ENCODE measurements at regions of chr1 and their contacts with region 1.

Region 1: DNA sequence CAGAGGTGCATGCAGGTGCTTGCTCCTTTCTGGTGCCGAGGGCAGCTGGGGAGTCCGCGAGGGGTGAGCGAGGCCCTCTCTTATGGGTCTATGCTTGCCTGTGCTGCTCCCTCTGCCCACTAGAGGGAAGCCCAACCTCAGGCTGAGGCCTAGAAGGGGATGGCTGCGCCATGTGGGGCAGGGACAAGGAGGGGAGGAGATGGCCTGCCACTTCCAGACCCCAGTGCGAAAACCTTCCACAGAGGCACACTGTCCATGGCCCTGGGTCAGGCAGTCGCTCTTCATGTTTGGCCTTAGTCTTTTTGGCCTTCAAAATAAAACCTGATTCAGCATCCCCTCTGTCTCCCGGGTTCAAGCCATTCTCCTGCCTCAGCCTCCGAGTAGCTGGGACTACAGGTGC is 14.0 kb downstream of the RHBG start:
- DNase-seq: peak; percentile 86
- ATAC-seq: peak; percentile 95
- H3K4me3 ChIP-seq: no peak overlapping the region
- H3K27ac ChIP-seq: no peak overlapping the region
- H3K4me1 ChIP-seq: peaks cover 12% of the 10 kb centered on the region; the same call in 1 of the 2 replicates
- H3K27me3 ChIP-seq: no peaks in the 10 kb centered on the region
- CTCF ChIP-seq: peak; percentile 95

Region 2: GRCh38 chr1:156291226-156292061 is 91.6 kb before region 1 on chr1:
- CTCF ChIA-PET with region 1: no interaction called
- POLR2A ChIA-PET with region 1: no interaction called
- intact Hi-C with region 1: no loop called
- DNase-seq: peak; percentile 76
- ATAC-seq: peak; percentile 95
- H3K4me3 ChIP-seq: peak overlapping the region; percentile 66
- H3K27ac ChIP-seq: no peak overlapping the region
- H3K4me1 ChIP-seq: peaks cover 15% of the 10 kb centered on the region; the same call in 1 of the 2 replicates
- H3K27me3 ChIP-seq: no peaks in the 10 kb centered on the region
- CTCF ChIP-seq: no peak

Region 3: GRCh38 chr1:156356875-156357534 is 26.0 kb before region 1 on chr1:
- CTCF ChIA-PET with region 1: interaction called, 10 read pairs
- POLR2A ChIA-PET with region 1: no interaction called
- intact Hi-C with region 1: no loop called
- DNase-seq: peak; percentile 94
- ATAC-seq: peak; percentile 97
- H3K4me3 ChIP-seq: peak overlapping the region; percentile 39; the same call in 1 of the 2 replicates
- H3K27ac ChIP-seq: no peak overlapping the region
- H3K4me1 ChIP-seq: no peaks in the 10 kb centered on the region
- H3K27me3 ChIP-seq: no peaks in the 10 kb centered on the region
- CTCF ChIP-seq: peak; percentile 99

Region 4: GRCh38 chr1:156445789-156446263 is 62.8 kb after region 1 on chr1:
- CTCF ChIA-PET with region 1: interaction called, 97 read pairs
- POLR2A ChIA-PET with region 1: no interaction called
- intact Hi-C with region 1: loop called (anchors 1 kb)
- DNase-seq: peak; percentile 96
- ATAC-seq: peak; percentile 90
- H3K4me3 ChIP-seq: no peak overlapping the region
- H3K27ac ChIP-seq: no peak overlapping the region
- H3K4me1 ChIP-seq: peaks cover 12% of the 10 kb centered on the region
- H3K27me3 ChIP-seq: peaks cover 13% of the 10 kb centered on the region
- CTCF ChIP-seq: peak; percentile 97

Region 5: DNA sequence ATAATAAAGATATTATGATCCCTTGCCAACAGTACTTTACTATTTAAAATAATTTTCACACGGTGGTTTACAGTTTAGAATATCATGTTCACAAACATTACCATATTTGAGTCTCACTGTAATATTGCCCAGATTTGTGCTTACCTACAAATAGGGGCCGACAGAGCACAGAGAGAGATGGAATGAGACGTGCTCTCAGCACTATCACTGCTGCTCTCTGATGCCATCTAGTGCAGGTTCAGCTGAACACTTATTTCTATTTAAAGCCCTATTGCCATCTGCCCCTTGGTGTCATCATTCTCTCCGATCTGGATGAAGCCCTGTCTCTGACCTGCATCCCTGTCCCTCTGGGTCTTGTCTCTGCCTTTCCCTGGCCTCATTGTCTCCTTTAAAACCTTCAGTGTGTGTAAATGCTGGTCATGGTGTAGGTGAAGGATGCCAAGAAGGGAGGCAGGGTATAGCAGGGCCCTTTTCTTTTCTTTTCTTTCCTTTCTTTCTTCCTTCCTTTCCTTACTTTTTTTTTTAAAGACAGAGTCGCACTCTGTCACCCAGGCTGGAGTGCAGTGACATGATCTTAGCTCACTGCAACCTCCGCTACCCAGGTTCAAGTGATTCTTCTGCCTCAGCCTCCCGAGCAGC is 225.1 kb after region 1 on chr1:
- CTCF ChIA-PET with region 1: interaction called, 4 read pairs
- POLR2A ChIA-PET with region 1: no interaction called
- intact Hi-C with region 1: loop called (anchors 1 kb)
- DNase-seq: peak; percentile 87
- ATAC-seq: peak; percentile 98
- H3K4me3 ChIP-seq: no peak overlapping the region
- H3K27ac ChIP-seq: no peak overlapping the region
- H3K4me1 ChIP-seq: no peaks in the 10 kb centered on the region
- H3K27me3 ChIP-seq: no peaks in the 10 kb centered on the region
- CTCF ChIP-seq: peak; percentile 92